ENCODE measurements at regions of chr22 and their contacts with region 1.

Region 1: GRCh38 chr22:50112151-50113118 is 22.6 kb downstream of the MOV10L1 start:
- DNase-seq: peak; percentile 58
- ATAC-seq: peak; percentile 87
- H3K4me3 Mint-ChIP-seq: peak overlapping the region; percentile 62
- H3K27ac Mint-ChIP-seq: peak overlapping the region; percentile 93
- H3K4me1 Mint-ChIP-seq: peaks cover 24% of the 10 kb centered on the region
- H3K27me3 Mint-ChIP-seq: no peaks in the 10 kb centered on the region

Region 2: DNA sequence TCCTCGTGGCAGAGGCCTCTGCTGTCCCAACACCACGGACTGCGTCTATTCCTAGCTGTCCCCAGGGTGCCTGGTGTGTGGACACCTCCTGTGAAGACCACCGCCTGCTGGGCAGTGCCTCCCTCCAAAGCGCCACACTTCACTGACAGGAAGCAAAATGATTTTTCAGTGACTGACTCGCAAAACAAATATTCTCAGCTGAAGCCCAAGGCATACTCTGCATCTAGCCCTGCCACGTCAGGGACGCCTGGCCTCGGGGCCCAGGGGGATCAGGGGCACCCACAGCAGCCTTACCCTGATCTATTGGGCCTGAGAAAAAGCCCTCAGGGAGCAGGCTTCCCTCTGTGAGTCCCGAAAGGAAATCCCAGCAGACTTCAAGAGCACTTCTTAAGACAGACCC is 287.0 kb before region 1 on chr22:
- CTCF ChIA-PET with region 1: no interaction called
- POLR2A ChIA-PET with region 1: no interaction called
- DNase-seq: no peak
- ATAC-seq: no peak
- H3K4me3 Mint-ChIP-seq: peak overlapping the region; percentile 93
- H3K27ac Mint-ChIP-seq: peak overlapping the region; percentile 97
- H3K4me1 Mint-ChIP-seq: peaks cover 47% of the 10 kb centered on the region
- H3K27me3 Mint-ChIP-seq: no peaks in the 10 kb centered on the region

Region 3: GRCh38 chr22:50085211-50085972 is 27.0 kb before region 1 on chr22 and contains the start of gene MLC1:
- CTCF ChIA-PET with region 1: interaction called, 3 read pairs
- POLR2A ChIA-PET with region 1: interaction called, 17 read pairs
- DNase-seq: peak; percentile 53
- ATAC-seq: no peak
- H3K4me3 Mint-ChIP-seq: no peak within 1 kb of the TSS
- H3K27ac Mint-ChIP-seq: no peak within 1 kb of the TSS
- H3K4me1 Mint-ChIP-seq: peaks cover 3% of the 10 kb centered on the region
- H3K27me3 Mint-ChIP-seq: no peaks in the 10 kb centered on the region
- total RNA-seq, gene MLC1: 8.3 to 9.4 TPM